ENCODE measurements at regions of chr9 and their contacts with region 1.

Region 1: GRCh38 chr9:93365427-93366118 is 85.9 kb upstream of the FAM120A start:
- DNase-seq: no peak
- H3K4me3 ChIP-seq: no peak overlapping the region
- H3K27ac ChIP-seq: no peak overlapping the region
- H3K4me1 ChIP-seq: no peaks in the 10 kb centered on the region
- H3K27me3 ChIP-seq: no peaks in the 10 kb centered on the region
- CTCF ChIP-seq: no peak

Region 2: DNA sequence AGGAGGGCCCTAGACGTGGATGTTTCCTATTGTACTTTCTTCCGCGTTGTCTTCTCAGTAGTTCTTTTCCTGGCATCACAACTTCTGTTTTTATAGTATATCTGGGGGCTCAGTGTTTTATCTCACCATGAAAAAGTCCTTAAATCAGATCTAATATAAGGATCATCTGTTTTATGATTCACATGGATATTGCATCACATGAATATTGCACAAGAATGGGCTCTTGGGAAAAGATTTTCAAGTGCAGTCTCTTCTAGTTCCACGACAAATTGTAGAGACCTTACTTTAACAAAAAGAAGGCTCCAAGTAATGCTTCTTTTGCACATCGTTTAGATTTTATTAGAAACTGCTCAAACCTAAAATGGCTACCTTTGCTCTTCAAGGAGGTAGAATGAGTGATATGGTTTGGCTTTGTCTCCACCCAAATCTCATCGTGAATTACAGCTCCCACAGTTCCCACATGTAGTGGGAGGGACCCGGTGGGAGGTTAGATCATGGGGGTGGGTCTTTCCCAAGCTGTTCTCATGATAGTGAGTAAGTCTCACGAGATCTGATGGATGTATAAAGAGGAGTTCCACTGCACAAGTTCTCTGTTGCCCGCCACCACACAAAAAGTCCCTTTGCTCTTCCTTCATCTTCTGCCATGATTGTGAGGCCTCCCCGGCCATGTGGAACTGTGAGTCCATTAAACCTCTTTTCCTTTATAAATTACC is 32.2 kb after region 1 on chr9:
- CTCF ChIA-PET with region 1: no interaction called
- dilution Hi-C with region 1: loop called (anchors 5 kb)
- in situ Hi-C with region 1: no loop called
- intact Hi-C with region 1: no loop called
- DNase-seq: peak; percentile 42
- H3K4me3 ChIP-seq: no peak overlapping the region
- H3K27ac ChIP-seq: no peak overlapping the region
- H3K4me1 ChIP-seq: no peaks in the 10 kb centered on the region
- H3K27me3 ChIP-seq: no peaks in the 10 kb centered on the region
- CTCF ChIP-seq: no peak

Region 3: DNA sequence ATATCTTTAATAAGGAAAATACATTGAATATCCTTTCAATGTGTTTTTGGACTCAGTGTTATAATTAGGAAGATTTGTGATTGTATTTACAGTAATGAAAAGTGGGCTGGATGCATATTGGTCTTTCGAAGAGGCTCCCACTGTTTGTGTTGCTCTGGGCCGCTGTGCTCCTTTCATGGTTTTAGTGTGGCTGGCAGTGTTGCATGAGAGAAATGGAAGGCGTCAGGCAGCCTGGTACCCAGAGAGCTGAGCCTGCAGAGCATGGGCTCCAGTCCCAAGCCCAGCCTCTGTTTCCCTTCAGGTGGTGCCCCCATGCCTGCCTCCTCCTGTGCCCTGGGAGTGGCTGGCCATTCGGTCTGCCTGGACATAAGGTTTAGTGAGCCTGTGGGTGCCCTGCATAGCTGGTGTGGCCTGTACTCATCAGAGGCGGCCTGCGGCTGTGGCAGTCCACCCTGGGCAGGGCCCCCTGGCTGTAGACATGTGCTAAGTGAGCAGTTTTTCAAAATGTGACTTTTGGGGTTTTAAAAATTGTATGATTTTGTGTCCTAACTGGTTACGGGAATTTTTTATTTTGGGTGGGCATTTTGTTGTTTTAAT is 115.3 kb after region 1 on chr9:
- CTCF ChIA-PET with region 1: no interaction called
- dilution Hi-C with region 1: no loop called
- in situ Hi-C with region 1: no loop called
- intact Hi-C with region 1: no loop called
- DNase-seq: no peak
- H3K4me3 ChIP-seq: no peak overlapping the region
- H3K27ac ChIP-seq: no peak overlapping the region
- H3K4me1 ChIP-seq: no peaks in the 10 kb centered on the region
- H3K27me3 ChIP-seq: no peaks in the 10 kb centered on the region
- CTCF ChIP-seq: no peak